Dorsolateral prefrontal cortex (tissue), 120 donors: ENCODE measurements at regions of chr15 and their contacts with region 1.

Region 1: GRCh38 chr15:82046666-82047452 is 1.0 kb upstream of the MEX3B start:
- DNase-seq: peak; percentile 77 to 92 (median 84)
- H3K4me3 ChIP-seq: peak overlapping the region; percentile 67 to 95 (median 84)
- H3K27ac ChIP-seq: peak overlapping the region; percentile 71 to 99 (median 96)
- H3K27me3 ChIP-seq: peaks cover 0 to 7% (median 0%) of the 10 kb centered on the region in 45 donors
- CTCF ChIP-seq: peak; percentile 36 to 88 (median 72)

Region 2: GRCh38 chr15:81323944-81324881 is 722.6 kb before region 1 on chr15 and contains the start of gene STARD5:
- intact Hi-C with region 1: loop called in 1 of 2 experiments (anchors 10 kb)
- DNase-seq: peak; percentile 97 to 100 (median 98)
- H3K4me3 ChIP-seq: peak within 1 kb of the TSS; percentile 57 to 96 (median 85)
- H3K27ac ChIP-seq: peak within 1 kb of the TSS in 25 of 59 donors; percentile 14 to 86 (median 54)
- H3K27me3 ChIP-seq: no peaks in the 10 kb centered on the region
- CTCF ChIP-seq: peak in 15 of 56 donors; percentile 7 to 40 (median 31)
- total RNA-seq, gene STARD5: 4.8 to 16.1 (median 9.5) TPM

Region 3: DNA sequence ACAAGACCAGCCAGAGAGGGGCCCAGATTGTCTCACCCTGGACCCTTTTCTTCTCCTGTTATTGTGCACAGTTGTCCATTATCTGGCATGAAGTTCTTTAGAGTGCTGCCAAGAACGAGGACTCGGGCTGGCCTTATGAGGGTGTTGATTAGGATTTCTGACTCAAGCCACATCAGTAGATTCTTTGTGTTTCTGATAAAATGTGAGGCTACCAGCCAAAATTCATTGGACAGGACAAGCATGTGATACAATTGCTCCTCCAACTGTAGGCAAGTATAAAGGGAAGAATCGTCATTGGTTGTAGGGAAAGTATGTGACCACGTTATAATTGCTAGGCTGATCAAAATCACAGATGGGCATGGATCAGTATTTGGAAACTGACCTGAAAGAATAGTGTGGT is 573.7 kb before region 1 on chr15:
- intact Hi-C with region 1: loop called in 1 of 2 experiments (anchors 5 kb)
- DNase-seq: peak in 1 of 10 donors; percentile 44
- H3K4me3 ChIP-seq: peak overlapping the region in 6 of 59 donors; percentile 2 to 35 (median 15)
- H3K27ac ChIP-seq: peak overlapping the region in 3 of 59 donors; percentile 8 to 41 (median 9)
- H3K27me3 ChIP-seq: peaks cover 0 to 4% (median 0%) of the 10 kb centered on the region in 45 donors
- CTCF ChIP-seq: peak in 1 of 56 donors; percentile 20

Region 4: DNA sequence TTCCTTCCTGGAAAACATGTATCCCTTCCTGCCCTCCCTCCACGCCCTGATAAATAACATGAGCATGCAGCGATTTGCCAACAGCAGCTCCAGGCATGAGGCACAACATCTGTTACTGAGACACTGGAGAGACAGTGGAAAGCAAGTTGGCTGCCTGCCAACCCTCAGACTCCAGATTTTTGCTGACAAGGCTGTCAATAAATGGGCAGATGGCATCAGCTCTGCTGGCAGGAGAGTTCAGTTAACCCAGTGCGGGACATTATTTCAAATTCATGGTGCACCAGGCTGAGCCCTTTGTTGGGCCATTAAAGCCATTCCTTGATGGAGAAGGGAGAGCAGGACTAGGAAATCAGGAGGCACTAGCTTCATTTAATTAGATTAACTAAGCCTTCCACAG is 294.3 kb before region 1 on chr15:
- intact Hi-C with region 1: loop called (anchors 10 kb)
- DNase-seq: peak; percentile 24 to 83 (median 72)
- H3K4me3 ChIP-seq: no peak overlapping the region
- H3K27ac ChIP-seq: no peak overlapping the region
- H3K27me3 ChIP-seq: peaks cover 0 to 55% (median 7%) of the 10 kb centered on the region in 45 donors
- CTCF ChIP-seq: no peak

Region 5: GRCh38 chr15:81766829-81767475 is 279.9 kb before region 1 on chr15:
- intact Hi-C with region 1: no loop called
- DNase-seq: peak in 1 of 10 donors; percentile 34
- H3K4me3 ChIP-seq: no peak overlapping the region
- H3K27ac ChIP-seq: no peak overlapping the region
- H3K27me3 ChIP-seq: peaks cover 0 to 21% (median 0%) of the 10 kb centered on the region in 45 donors
- CTCF ChIP-seq: no peak

Region 6: GRCh38 chr15:82183121-82184033 is 136.5 kb after region 1 on chr15:
- intact Hi-C with region 1: loop called in 1 of 2 experiments (anchors 5 kb)
- DNase-seq: no peak
- H3K4me3 ChIP-seq: peak overlapping the region in 2 of 59 donors; percentile 4 to 11
- H3K27ac ChIP-seq: peak overlapping the region in 55 of 59 donors; percentile 25 to 89 (median 76)
- H3K27me3 ChIP-seq: no peaks in the 10 kb centered on the region
- CTCF ChIP-seq: no peak